Gastrocnemius medialis (tissue), 4 donors: ENCODE measurements at regions of chr13 and their contacts with region 1.

Region 1: DNA sequence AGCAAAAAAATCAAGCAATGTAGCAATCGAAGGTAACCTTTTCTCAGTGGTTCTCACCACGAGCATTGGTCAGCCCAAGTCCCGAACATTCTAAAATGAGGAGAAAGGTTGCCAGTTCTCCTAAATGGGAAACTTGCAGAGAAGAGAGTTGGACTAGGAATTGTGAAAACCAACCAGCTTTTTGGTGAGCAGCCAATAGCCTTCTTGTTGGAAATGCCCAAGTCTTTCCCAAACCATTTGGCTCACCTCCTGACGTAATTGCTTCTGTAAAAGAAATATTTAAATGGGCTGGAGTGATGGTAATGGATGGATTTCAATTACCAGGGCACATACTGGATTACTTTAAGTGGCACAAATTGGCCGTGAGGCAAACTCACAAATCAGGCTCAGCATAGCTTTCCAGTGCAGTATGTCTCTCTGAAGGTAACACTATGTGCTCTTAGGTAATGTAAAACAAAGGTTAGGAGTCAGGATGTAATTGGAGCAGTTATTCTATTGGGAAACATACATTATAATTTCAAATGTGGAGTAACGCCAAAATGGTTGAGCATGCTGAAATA is 423.2 kb downstream of the KLF5 start:
- DNase-seq: peak; percentile 35 to 63
- ATAC-seq: peak; percentile 81 to 86
- H3K4me3 ChIP-seq: peak overlapping the region in 1 of 4 donors; percentile 1
- H3K27ac ChIP-seq: peak overlapping the region; percentile 71 to 85 (median 82)
- H3K4me1 ChIP-seq: peaks cover 21 to 38% of the 10 kb centered on the region in 2 donors
- H3K27me3 ChIP-seq: no peaks in the 10 kb centered on the region
- CTCF ChIP-seq: no peak
- POLR2A ChIP-seq: no peak

Region 2: DNA sequence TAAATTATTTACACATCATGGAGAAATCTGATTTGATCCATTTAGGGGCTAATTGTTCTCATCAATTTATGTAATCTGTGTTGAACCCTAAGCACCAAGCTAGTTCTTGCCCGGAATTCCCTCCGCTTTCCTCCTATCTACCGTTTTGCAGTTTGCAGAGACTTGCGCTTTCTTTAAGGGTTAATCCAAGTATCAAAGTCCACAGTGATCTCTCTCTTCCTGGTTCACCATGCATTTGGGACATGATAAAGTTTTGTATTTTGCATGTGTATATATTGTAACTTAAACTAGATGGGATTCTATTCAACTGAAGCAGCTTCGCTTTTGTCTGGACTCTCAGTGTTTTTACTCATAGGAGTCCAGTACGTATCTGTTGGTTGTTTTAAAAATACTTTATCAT is 436.9 kb before region 1 on chr13:
- in situ Hi-C with region 1: no loop called
- intact Hi-C with region 1: no loop called
- DNase-seq: no peak
- ATAC-seq: no peak
- H3K4me3 ChIP-seq: no peak overlapping the region
- H3K27ac ChIP-seq: no peak overlapping the region
- H3K4me1 ChIP-seq: no peaks in the 10 kb centered on the region
- H3K27me3 ChIP-seq: no peaks in the 10 kb centered on the region
- CTCF ChIP-seq: no peak
- POLR2A ChIP-seq: no peak

Region 3: GRCh38 chr13:73421310-73421912 is 60.6 kb before region 1 on chr13:
- in situ Hi-C with region 1: no loop called
- intact Hi-C with region 1: loop called (anchors 5 kb)
- DNase-seq: peak; percentile 23 to 49
- ATAC-seq: peak; percentile 94 to 97
- H3K4me3 ChIP-seq: no peak overlapping the region
- H3K27ac ChIP-seq: peak overlapping the region in 1 of 4 donors; percentile 37
- H3K4me1 ChIP-seq: peaks cover 4 to 15% of the 10 kb centered on the region in 2 donors
- H3K27me3 ChIP-seq: no peaks in the 10 kb centered on the region
- CTCF ChIP-seq: no peak
- POLR2A ChIP-seq: no peak

Region 4: DNA sequence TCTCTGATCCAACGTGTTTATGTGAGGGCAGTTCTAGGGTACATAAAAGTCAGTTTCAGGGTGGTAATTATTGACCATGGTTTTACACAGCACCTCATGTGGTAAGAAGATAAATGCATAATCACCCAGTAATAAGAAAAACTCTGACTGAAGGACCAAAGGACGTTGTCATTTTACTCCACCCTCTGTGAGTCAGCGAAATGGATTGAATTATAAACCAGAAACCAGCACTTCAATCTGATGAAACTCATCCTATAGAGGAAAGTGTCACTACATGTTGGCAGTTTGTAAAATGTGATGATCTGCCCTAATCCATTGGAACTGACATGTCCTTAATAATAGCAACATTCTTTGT is 16.4 kb before region 1 on chr13:
- in situ Hi-C with region 1: no loop called
- intact Hi-C with region 1: loop called (anchors 2 kb)
- DNase-seq: no peak
- ATAC-seq: peak; percentile 41 to 57
- H3K4me3 ChIP-seq: no peak overlapping the region
- H3K27ac ChIP-seq: peak overlapping the region; percentile 62 to 80 (median 78)
- H3K4me1 ChIP-seq: peaks cover 4 to 16% of the 10 kb centered on the region in 2 donors
- H3K27me3 ChIP-seq: no peaks in the 10 kb centered on the region
- CTCF ChIP-seq: no peak
- POLR2A ChIP-seq: no peak

Region 5: GRCh38 chr13:73531014-73531413 is 49.0 kb after region 1 on chr13:
- in situ Hi-C with region 1: no loop called
- intact Hi-C with region 1: loop called (anchors 1 kb)
- DNase-seq: peak; percentile 56 to 71
- ATAC-seq: peak; percentile 96
- H3K4me3 ChIP-seq: no peak overlapping the region
- H3K27ac ChIP-seq: peak overlapping the region; percentile 57 to 84 (median 81)
- H3K4me1 ChIP-seq: peaks cover 19% of the 10 kb centered on the region in 2 donors
- H3K27me3 ChIP-seq: no peaks in the 10 kb centered on the region
- CTCF ChIP-seq: no peak
- POLR2A ChIP-seq: no peak